Cardiac septum (tissue), 1 donor: ENCODE measurements at regions of chr2 and their contacts with region 1.

Region 1: GRCh38 chr2:132790207-132790785 is 120.3 kb upstream of the LYPD1 start:
- DNase-seq: no peak

Region 2: DNA sequence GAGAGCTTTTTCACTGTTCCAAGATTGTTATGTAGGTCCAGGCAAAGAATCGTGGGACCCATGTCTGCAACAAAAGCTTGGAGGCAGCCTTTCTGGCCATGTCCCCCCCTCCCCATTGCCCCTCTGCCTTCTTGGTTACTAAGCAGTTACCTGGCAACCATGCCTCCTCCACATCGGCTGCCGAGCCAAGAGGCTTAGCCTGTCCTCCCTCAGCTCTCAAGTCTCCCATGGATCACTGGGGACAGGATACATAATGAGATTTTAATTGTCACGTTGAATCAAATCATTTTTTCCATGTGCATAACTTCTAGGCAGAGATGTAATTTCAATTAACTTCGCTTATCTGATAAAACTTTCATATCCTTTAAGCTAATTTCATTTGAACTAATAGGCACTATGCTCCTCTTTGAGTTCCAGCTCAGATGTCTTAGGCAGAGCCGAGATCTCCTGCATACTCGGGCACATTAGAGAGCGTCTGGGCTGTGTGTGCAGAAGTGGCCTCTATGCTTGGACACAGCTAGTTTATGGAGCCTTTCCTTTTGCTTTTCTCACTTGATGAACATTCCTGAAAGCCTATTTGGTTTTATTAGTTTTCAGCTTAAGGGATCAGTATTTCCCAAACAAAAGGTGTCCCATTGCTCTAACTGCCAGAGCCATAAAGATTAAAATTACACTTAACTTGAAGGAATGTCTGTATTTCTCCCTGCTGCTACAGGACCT is 201.0 kb before region 1 on chr2:
- intact Hi-C with region 1: loop called (anchors 5 kb)
- DNase-seq: no peak

Region 3: DNA sequence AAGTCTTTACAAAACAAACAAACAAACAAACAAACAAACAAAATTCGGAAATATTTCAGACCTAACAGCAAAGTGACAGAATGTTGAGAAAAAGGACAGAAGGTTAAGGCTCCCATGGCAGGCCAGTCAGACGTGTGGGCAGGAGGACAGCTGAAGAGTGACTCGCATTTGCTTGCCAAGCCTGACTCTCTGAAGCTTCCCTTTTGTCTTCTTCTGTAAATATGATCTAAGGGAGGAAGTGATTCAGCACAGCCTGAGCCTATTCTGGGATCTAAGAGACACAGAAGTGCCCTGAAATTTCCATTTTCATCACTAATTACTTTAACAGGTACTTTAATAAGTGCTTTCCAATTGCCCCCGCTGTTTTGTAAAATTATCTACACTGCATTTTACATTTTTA is 13.8 kb after region 1 on chr2:
- intact Hi-C with region 1: no loop called
- DNase-seq: no peak

Region 4: GRCh38 chr2:132844585-132844984 is 54.3 kb after region 1 on chr2:
- intact Hi-C with region 1: no loop called
- DNase-seq: no peak